ENCODE measurements at regions of chr16 and their contacts with region 1.

Region 1: GRCh38 chr16:84511180-84511824 is 6.8 kb upstream of the MEAK7 start:
- DNase-seq: no peak
- H3K4me3 ChIP-seq: peak overlapping the region in 1 of 4 donors; percentile 26
- H3K27ac ChIP-seq: no peak overlapping the region
- H3K4me1 ChIP-seq: peaks cover 6 to 18% (median 8%) of the 10 kb centered on the region in 3 donors
- H3K27me3 ChIP-seq: no peaks in the 10 kb centered on the region
- CTCF ChIP-seq: peak; percentile 92 to 99 (median 96)
- POLR2A ChIP-seq: no peak

Region 2: DNA sequence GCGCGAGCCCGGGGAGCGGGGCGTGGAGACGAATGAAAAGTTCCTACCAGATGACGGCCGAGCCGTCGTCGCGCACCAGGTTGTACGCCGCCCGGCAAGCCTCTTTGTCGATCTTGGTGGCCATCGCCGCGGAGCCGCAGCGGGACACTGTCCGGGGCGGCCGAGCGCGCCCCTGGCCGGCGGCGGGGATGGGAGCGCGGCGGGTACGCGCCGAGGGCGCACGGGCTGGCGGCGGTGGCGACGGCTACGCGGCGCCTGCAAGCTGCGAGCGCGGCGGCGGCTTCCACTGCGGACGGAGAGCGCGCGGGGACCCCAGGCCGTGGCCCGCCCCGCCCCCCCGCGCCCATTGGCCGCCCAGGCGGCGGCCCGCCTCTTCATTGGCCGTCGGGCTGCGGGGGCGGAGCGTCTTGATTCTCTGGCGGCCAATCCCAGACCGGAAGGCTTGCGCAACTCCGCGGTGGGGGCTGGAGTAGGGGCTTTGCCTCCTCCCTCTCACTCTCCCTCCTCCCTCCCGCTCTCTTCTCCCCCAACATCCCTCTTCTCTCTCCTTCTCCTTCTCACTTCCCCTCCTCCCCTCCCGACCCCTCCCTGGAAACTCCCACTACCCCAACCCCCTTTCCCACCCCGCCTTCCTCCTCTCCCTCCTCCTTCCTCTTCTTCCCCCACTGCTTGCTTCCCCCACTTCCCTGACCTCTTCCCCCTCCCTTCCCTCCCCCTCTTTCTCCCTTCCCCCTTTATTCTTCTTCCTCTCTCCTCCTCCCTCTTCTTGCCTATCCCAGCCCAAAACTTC is 106.7 kb after region 1 on chr16 and contains the start of gene COTL1:
- intact Hi-C with region 1: loop called (anchors 5 kb)
- DNase-seq: peak; percentile 78
- H3K4me3 ChIP-seq: peak within 1 kb of the TSS; percentile 54 to 87 (median 72)
- H3K27ac ChIP-seq: peak within 1 kb of the TSS; percentile 75 to 90 (median 82)
- H3K4me1 ChIP-seq: peaks cover 24 to 63% (median 29%) of the 10 kb centered on the region in 3 donors
- H3K27me3 ChIP-seq: peaks cover 0 to 11% (median 0%) of the 10 kb centered on the region in 4 donors
- CTCF ChIP-seq: no peak
- POLR2A ChIP-seq: peak in 2 of 4 donors; percentile 75 to 80
- total RNA-seq, gene COTL1: 7.9 to 34.2 (median 23.4) TPM